ENCODE measurements at regions of chr3 and their contacts with region 1.

Region 1: GRCh38 chr3:193040836-193041672 is 123.4 kb upstream of the MB21D2 start:
- DNase-seq: no peak
- H3K4me3 ChIP-seq: no peak overlapping the region
- H3K27ac ChIP-seq: no peak overlapping the region
- H3K4me1 ChIP-seq: no peaks in the 10 kb centered on the region
- H3K27me3 ChIP-seq: no peaks in the 10 kb centered on the region
- CTCF ChIP-seq: peak in 2 of 3 experiments; percentile 45 to 54; a peak in 2 of 4 replicates
- EP300 ChIP-seq: no peak
- POLR2A ChIP-seq: no peak
- RAD21 ChIP-seq: peak; percentile 82 to 83

Region 2: DNA sequence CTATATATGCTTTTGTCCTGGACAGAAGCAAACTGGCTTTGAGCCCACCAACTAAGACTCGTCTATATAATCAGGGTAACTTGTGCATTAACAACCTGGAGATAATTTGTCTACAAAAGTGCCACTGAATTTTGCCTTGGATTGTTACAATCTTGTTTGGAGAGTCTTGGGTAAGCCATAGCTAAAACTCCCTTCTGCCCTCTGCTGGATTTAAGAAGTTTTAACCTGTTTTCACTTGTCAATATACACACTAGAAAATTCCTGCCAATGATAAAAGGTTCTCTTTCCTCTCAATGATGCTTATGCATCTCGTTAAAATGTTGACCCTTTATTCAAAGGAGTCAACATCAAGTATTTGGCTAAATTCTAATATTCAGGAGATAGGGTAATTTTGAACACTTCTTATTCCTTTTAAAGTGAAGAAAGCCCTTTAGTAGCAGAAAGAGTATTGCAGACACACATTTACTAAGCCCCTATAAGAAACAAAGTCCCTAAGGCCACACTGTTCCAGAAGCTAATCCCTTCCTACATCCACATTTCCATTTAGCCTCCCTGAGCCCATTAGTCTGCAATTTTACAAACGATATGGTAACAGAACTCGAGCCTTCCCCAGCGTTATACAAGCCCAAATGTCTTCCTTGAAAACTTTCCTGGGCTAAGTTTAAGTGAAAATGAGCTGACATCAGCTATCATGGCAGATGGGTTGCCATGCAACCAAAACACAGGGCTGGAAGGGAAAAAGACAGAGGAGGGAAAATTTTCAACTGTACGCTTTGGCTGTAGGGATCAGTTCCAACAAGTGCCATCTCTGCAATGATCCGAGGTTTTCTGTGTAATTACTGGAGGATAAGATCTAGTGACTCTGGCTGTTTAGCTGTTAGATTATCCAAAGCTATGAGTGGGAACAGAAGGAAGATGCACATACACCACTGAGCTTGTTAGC is 237.8 kb before region 1 on chr3:
- CTCF ChIA-PET with region 1: interaction called, 13 read pairs
- POLR2A ChIA-PET with region 1: no interaction called
- DNase-seq: no peak
- H3K4me3 ChIP-seq: no peak overlapping the region
- H3K27ac ChIP-seq: no peak overlapping the region
- H3K4me1 ChIP-seq: peaks cover 0 to 3% (median 0%) of the 10 kb centered on the region in 4 experiments; a peak in 1 of 7 replicates
- H3K27me3 ChIP-seq: no peaks in the 10 kb centered on the region
- CTCF ChIP-seq: peak in 2 of 3 experiments; percentile 42 to 51; a peak in 2 of 4 replicates
- EP300 ChIP-seq: no peak
- POLR2A ChIP-seq: no peak
- RAD21 ChIP-seq: peak; percentile 59 to 62

Region 3: GRCh38 chr3:192923731-192924130 is 117.3 kb before region 1 on chr3:
- CTCF ChIA-PET with region 1: interaction called, 14 read pairs
- POLR2A ChIA-PET with region 1: no interaction called
- DNase-seq: no peak
- H3K4me3 ChIP-seq: no peak overlapping the region
- H3K27ac ChIP-seq: no peak overlapping the region
- H3K4me1 ChIP-seq: peaks cover 0 to 15% (median 7%) of the 10 kb centered on the region in 4 experiments; a peak in 4 of 7 replicates
- H3K27me3 ChIP-seq: no peaks in the 10 kb centered on the region; a peak in 1 of 7 replicates
- CTCF ChIP-seq: no peak
- EP300 ChIP-seq: no peak
- POLR2A ChIP-seq: no peak
- RAD21 ChIP-seq: no peak

Region 4: GRCh38 chr3:193030276-193030675 is 10.8 kb before region 1 on chr3:
- CTCF ChIA-PET with region 1: interaction called, 18 read pairs
- POLR2A ChIA-PET with region 1: no interaction called
- DNase-seq: no peak
- H3K4me3 ChIP-seq: no peak overlapping the region
- H3K27ac ChIP-seq: no peak overlapping the region
- H3K4me1 ChIP-seq: peaks cover 0 to 6% (median 0%) of the 10 kb centered on the region in 4 experiments; a peak in 2 of 7 replicates
- H3K27me3 ChIP-seq: no peaks in the 10 kb centered on the region
- CTCF ChIP-seq: no peak
- EP300 ChIP-seq: no peak
- POLR2A ChIP-seq: no peak
- RAD21 ChIP-seq: no peak

Region 5: DNA sequence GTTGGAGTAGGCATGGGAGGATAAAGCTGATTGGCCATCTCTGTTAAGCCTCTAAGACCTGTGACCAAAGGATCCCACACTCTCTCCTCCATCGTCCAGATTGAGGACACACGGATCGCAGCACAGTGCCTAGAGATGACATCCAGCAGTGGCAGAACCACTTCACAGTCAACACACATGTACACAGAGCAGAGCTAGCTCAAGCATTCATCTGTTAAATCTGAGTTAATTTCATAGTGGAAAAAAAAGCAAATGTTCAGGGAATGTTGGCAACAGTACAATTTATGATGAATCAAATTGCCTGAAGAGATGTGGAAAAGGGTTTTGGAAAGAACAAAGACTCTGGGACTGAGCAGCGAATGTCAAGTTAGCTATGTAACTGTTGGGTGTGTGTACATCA is 91.9 kb after region 1 on chr3:
- CTCF ChIA-PET with region 1: interaction called, 13 read pairs
- POLR2A ChIA-PET with region 1: no interaction called
- DNase-seq: no peak
- H3K4me3 ChIP-seq: no peak overlapping the region
- H3K27ac ChIP-seq: no peak overlapping the region
- H3K4me1 ChIP-seq: peaks cover 0 to 6% (median 0%) of the 10 kb centered on the region in 4 experiments; a peak in 1 of 7 replicates
- H3K27me3 ChIP-seq: no peaks in the 10 kb centered on the region
- CTCF ChIP-seq: no peak
- EP300 ChIP-seq: no peak
- POLR2A ChIP-seq: no peak
- RAD21 ChIP-seq: no peak

Region 6: GRCh38 chr3:193229851-193230425 is 188.9 kb after region 1 on chr3:
- CTCF ChIA-PET with region 1: no interaction called
- POLR2A ChIA-PET with region 1: no interaction called
- DNase-seq: no peak
- H3K4me3 ChIP-seq: 0 out of 8 replicates have a peak overlapping the region, but pooled peaks of 1 of the 4 experiments have one; percentile 13
- H3K27ac ChIP-seq: no peak overlapping the region
- H3K4me1 ChIP-seq: peaks cover 0 to 31% (median 20%) of the 10 kb centered on the region in 4 experiments
- H3K27me3 ChIP-seq: no peaks in the 10 kb centered on the region
- CTCF ChIP-seq: no peak
- EP300 ChIP-seq: no peak
- POLR2A ChIP-seq: no peak
- RAD21 ChIP-seq: no peak

Region 7: DNA sequence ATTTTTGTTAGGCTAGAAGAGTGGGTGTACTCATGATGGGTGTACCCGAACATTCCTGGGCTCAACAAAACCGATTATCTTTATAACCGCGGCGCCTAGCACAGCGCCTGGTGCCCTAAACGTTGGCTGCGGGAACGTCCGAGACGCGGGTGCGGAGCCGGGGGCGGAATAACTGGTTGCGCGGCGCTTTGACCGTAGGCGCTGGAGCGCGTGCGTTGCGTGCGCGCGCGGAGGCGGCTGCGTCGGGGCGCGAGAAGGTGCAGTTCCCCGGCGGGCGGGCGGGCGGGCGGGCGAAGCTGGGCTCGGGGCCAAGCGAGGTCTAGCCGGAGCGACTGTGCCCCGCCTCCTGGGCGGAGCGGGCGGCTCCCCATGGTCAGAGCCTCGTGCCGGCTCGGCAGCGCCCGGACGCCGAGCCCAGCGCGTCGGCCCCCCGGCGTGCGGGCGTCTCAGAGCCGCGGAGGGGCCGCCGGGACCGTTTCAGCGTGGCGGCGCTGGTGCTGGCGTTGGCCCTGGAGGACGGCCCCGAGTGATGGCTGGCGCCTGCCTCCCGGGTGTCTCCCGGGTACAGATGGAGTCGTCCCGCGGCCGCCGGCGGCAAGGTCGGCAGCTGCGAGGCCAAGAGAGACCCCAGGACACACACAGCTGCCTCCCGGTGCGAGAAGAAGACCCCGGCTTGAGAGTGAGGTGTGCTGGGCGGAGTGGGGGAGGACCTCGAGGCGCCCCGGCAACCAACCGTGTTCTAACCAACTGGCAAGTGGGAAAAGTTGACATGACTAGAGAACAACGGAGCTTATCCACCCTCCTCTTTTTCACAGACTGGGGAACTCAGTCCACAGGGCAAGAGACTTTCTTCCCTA is 200.0 kb after region 1 on chr3 and contains the start of gene PLAAT1:
- CTCF ChIA-PET with region 1: no interaction called
- POLR2A ChIA-PET with region 1: no interaction called
- DNase-seq: peak; percentile 38 to 70
- H3K4me3 ChIP-seq: peak within 1 kb of the TSS; percentile 48 to 75 (median 70)
- H3K27ac ChIP-seq: no peak within 1 kb of the TSS
- H3K4me1 ChIP-seq: peaks cover 0 to 4% (median 3%) of the 10 kb centered on the region in 4 experiments; a peak in 3 of 7 replicates
- H3K27me3 ChIP-seq: peaks cover 0 to 15% (median 6%) of the 10 kb centered on the region in 4 experiments; a peak in 5 of 7 replicates
- CTCF ChIP-seq: no peak
- EP300 ChIP-seq: no peak
- POLR2A ChIP-seq: 0 out of 3 replicates have a peak, but pooled peaks of 1 of the 2 experiments have one; percentile 40
- RAD21 ChIP-seq: no peak
- total RNA-seq, gene PLAAT1: 3.4 and 6.0 TPM in 2 replicates